ENCODE measurements at regions of chr19 and their contacts with region 1.

Region 1: DNA sequence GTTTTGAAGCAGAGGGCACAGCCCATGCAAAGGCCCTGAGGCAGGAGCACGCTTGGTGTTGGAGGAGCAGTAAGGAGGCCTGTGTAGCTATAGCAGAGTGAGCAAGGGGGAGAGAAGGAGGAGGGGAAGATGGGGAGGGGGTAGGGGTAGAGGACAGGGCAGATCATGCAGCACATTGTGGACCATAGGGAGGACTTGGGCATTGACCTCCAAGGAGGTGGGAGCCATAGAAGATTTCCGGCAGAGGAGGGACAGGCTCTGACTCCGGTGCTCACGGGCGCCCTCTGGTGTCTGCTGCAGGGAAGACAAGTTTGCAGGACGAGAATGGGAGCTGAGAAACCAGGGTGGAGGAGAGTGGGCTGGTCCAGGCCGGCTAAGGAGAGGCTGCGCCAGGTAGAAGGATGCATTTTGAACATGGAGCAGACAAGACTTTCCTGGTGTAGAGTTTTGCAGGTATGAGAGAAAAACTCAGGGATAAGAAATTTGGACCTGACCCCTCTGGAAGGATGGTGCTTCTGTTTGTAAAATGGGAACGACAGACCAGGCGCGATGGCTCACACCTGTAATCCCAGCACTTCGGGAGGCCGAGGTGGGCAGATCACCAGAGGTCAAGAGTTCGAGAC is 13.7 kb upstream of the CREB3L3 start:
- DNase-seq: peak; percentile 94
- ATAC-seq: peak; percentile 92
- H3K4me3 Mint-ChIP-seq: peak overlapping the region; percentile 23
- H3K27ac Mint-ChIP-seq: peak overlapping the region; percentile 34
- H3K4me1 Mint-ChIP-seq: peaks cover 10% of the 10 kb centered on the region
- H3K27me3 Mint-ChIP-seq: peaks cover 3% of the 10 kb centered on the region

Region 2: GRCh38 chr19:3942790-3943409 is 196.8 kb before region 1 on chr19:
- CTCF ChIA-PET with region 1: no interaction called
- POLR2A ChIA-PET with region 1: no interaction called
- intact Hi-C with region 1: no loop called
- DNase-seq: no peak
- ATAC-seq: no peak
- H3K4me3 Mint-ChIP-seq: no peak overlapping the region
- H3K27ac Mint-ChIP-seq: no peak overlapping the region
- H3K4me1 Mint-ChIP-seq: no peaks in the 10 kb centered on the region
- H3K27me3 Mint-ChIP-seq: no peaks in the 10 kb centered on the region

Region 3: DNA sequence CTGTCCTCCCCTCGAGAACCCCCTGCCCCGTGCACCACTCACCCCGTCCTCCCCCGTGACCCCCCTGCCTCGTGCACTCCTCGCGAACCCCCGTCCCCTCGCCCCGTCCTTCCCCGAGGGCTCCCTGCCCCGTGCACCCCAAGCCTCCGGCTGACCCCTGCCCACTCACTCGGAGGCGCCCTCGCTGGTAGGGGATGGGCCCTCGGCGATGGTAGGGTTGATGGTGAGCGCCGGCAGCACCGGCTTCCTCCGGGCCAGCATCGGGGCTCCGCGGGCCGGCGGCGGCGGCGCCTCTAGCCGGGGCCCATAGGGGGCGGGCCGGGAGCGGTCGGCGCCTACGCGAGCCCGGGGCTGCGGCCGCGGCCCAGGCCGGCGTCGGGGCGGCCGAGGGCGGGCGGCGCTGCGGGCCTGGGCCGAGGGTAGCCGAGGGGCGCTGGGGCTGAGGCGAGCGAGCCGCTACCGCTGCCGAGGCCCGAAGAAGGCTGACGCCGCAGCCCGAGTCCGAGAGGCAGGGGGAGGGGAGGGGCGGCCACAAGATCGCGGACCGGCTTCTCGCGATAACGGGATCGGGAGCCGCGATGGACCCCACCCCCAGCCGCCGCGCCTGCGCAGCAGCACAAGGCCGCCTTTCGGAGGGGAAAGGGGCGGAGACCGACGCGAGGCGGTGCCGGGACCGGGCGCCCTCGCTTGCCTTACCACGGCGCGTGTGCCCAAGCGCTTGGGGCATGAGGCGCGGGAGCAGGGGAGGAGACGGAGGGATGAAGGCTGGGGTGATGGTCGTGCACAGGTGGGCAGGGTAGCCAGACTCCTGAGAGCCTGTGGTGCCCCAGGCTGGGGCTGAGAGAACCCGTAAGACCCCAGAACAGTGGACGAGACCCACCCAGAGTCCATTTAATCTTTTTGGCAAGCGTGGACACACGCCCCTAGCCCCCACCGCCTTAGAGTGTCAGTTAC is 15.8 kb before region 1 on chr19 and contains the start of gene MAP2K2:
- CTCF ChIA-PET with region 1: interaction called, 8 read pairs
- POLR2A ChIA-PET with region 1: no interaction called
- intact Hi-C with region 1: loop called in 1 of 2 experiments (anchors 1 kb)
- DNase-seq: peak; percentile 98
- ATAC-seq: peak; percentile 96
- H3K4me3 Mint-ChIP-seq: peak within 1 kb of the TSS; percentile 97
- H3K27ac Mint-ChIP-seq: peak within 1 kb of the TSS; percentile 92
- H3K4me1 Mint-ChIP-seq: peaks cover 18% of the 10 kb centered on the region
- H3K27me3 Mint-ChIP-seq: no peaks in the 10 kb centered on the region
- total RNA-seq, gene MAP2K2: 108 to 133 TPM

Region 4: DNA sequence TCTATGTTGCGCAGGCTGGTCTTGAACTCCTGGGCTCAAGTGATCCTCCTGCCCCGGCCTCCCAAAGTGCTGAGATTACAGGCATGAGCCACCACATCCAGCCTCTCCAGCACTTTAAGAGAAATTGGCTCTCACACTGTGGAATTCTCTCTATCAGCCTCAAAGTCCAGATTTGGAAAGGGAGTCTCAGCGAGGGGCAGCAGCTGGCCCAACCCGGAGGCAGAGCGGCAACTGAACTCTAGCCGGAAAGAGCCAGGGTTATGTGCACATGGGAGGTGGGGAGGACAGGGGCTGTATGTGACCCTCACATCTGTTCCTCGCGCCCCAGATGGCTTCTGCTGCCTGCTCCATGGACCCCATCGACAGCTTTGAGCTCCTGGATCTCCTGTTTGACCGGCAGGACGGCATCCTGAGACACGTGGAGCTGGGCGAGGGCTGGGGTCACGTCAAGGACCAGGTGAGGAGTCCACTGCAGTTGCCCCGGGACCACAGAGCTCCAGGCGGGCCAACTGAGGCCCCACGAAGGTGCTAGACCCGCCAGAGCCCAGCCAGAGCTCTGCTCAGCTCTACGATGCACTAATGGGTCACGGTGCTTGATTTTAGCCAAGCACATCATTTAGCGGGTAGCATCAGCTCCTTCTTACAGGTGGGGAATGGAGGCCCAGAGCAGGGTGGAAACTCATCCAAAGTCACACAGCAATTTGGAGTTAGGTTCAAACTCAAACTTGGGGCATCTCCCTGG is 15.0 kb after region 1 on chr19:
- CTCF ChIA-PET with region 1: interaction called, 13 read pairs
- POLR2A ChIA-PET with region 1: no interaction called
- intact Hi-C with region 1: no loop called
- DNase-seq: no peak
- ATAC-seq: no peak
- H3K4me3 Mint-ChIP-seq: no peak overlapping the region
- H3K27ac Mint-ChIP-seq: no peak overlapping the region
- H3K4me1 Mint-ChIP-seq: peaks cover 5% of the 10 kb centered on the region
- H3K27me3 Mint-ChIP-seq: peaks cover 2% of the 10 kb centered on the region

Region 5: DNA sequence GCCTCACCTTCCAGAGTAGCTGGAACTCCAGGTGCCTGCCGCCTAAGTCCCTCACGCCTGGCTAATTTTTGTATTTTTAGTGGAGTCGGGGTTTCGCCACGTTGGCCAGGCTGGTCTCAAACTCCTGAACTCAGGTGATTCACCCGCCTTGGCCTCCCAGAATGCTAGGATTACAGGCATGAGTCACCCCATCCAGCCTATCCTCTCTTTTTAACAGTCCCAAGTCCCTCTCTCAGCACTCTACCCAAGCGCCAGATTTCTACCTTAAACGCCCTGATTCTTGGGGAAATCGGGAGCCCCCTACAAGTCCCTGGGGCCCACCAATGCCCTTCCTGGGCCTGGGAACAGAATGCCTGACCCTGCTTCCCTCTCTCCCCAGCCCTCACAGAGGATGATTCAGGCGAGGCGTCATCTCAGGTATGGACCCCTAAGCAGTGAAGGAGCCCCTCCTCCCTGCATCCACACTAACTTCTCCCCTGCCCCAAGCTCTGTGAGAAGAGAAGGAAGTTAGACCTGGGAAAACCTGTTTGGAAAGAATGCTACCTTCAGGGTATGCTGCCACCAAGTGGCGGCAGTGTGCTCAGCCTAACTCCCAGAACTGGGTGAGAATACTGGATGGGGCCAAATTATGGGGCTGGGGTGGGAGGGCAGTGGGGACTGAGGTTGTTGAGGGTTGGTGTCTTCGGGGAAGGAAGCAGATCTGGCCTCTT is 68.8 kb after region 1 on chr19:
- CTCF ChIA-PET with region 1: interaction called, 3 read pairs
- POLR2A ChIA-PET with region 1: no interaction called
- intact Hi-C with region 1: loop called (anchors 1 to 10 kb)
- DNase-seq: no peak
- ATAC-seq: no peak
- H3K4me3 Mint-ChIP-seq: no peak overlapping the region
- H3K27ac Mint-ChIP-seq: no peak overlapping the region
- H3K4me1 Mint-ChIP-seq: no peaks in the 10 kb centered on the region
- H3K27me3 Mint-ChIP-seq: peaks cover 5% of the 10 kb centered on the region